ENCODE measurements at regions of chr10 and their contacts with region 1.

Region 1: DNA sequence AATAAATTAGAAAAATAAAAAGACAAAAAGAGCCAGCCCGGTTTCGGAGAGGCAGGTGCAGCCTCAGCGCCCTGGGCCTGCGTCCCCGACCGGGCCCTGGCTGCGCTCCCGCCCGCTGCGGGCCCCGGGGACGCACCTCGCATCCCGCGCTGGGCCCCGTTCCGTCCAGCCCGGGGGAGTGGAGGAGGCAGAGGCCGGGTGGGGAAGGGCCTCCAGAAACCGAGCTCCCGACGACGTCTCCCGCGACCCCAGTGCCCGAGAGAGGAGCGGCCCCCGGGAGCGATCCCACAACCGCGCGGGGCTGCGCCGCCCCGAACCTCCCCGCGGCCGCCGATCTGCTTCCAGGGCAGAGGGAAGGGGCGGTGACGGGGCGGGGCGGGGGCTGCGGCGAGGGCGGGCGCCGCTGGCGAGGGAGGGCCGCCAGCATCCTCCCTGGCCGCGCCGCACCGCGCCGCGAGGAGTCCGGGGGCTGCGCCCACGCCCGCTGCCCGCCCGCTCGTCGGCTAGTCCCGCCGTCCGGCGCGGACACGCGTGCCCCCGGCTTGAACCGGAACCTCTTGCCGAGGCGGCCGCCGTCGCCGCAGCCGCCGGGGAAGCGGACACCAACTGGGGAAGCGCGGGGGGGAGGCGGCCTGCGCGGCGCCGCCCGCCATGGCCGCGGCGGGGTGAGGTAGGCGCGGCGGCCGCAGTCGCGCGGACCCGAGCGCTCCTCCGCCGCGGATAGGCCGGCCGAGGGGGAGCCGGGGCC is at the start of gene CCNY:
- DNase-seq: peak; percentile 88 to 90 (median 88)
- ATAC-seq: peak; percentile 84
- H3K4me3 ChIP-seq: peak within 1 kb of the TSS; percentile 90
- H3K27ac ChIP-seq: peak within 1 kb of the TSS; percentile 81
- H3K4me1 ChIP-seq: peaks cover 12 to 43% of the 10 kb centered on the region in 2 experiments; a peak in 4 of 5 replicates
- H3K27me3 ChIP-seq: no peaks in the 10 kb centered on the region
- CTCF ChIP-seq: no peak
- EP300 ChIP-seq: no peak
- POLR2A ChIP-seq: peak; percentile 83
- RAD21 ChIP-seq: no peak
- polyA plus RNA-seq, gene CCNY: 8.4 to 9.1 TPM

Region 2: DNA sequence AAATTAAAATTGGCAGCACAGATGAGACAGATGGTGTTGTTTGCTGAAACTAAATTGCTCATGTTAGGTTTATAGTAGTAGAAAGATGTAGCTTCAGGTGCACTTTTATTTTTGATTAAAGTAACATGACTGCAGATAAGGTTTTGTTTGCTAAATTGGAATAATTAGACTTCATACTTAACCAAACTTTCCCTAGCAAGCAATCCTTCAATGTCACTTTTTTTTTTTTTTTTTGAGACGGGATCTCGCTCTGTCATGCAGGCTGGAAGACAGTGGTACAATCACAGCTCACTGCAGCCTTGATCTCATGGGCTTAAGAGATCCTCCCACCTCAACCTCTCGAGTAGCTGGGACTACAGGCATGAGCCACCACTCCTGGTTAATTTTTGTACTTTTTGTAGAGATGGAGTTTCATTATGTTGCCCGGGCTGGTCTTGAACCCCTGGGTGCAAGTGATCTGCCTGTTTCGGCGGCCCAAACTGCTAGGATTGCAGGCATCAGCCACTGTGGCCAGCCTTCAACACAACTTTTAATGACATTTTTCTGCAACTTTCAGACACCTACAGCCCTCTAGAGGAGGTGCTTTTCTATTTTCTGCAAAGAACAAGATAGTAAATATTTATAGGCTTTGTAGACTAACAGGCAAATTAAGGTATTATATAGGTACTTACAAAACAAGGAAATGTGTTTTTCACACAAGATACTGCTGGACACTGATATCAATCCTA is 84.7 kb before region 1 on chr10:
- CTCF ChIA-PET with region 1: no interaction called
- POLR2A ChIA-PET with region 1: no interaction called
- in situ Hi-C with region 1: no loop called
- intact Hi-C with region 1: loop called (anchors 5 kb)
- DNase-seq: no peak
- ATAC-seq: no peak
- H3K4me3 ChIP-seq: no peak overlapping the region
- H3K27ac ChIP-seq: no peak overlapping the region
- H3K4me1 ChIP-seq: no peaks in the 10 kb centered on the region; a peak in 1 of 5 replicates
- H3K27me3 ChIP-seq: no peaks in the 10 kb centered on the region
- CTCF ChIP-seq: no peak
- EP300 ChIP-seq: no peak
- POLR2A ChIP-seq: no peak
- RAD21 ChIP-seq: no peak

Region 3: GRCh38 chr10:35353805-35354204 is 17.5 kb after region 1 on chr10:
- CTCF ChIA-PET with region 1: no interaction called
- POLR2A ChIA-PET with region 1: interaction called, 19 read pairs
- in situ Hi-C with region 1: no loop called
- intact Hi-C with region 1: no loop called
- DNase-seq: no peak
- ATAC-seq: peak; percentile 34
- H3K4me3 ChIP-seq: no peak overlapping the region
- H3K27ac ChIP-seq: no peak overlapping the region
- H3K4me1 ChIP-seq: peaks cover 12 to 48% of the 10 kb centered on the region in 2 experiments; a peak in 4 of 5 replicates
- H3K27me3 ChIP-seq: no peaks in the 10 kb centered on the region
- CTCF ChIP-seq: no peak
- EP300 ChIP-seq: no peak
- POLR2A ChIP-seq: no peak
- RAD21 ChIP-seq: no peak

Region 4: DNA sequence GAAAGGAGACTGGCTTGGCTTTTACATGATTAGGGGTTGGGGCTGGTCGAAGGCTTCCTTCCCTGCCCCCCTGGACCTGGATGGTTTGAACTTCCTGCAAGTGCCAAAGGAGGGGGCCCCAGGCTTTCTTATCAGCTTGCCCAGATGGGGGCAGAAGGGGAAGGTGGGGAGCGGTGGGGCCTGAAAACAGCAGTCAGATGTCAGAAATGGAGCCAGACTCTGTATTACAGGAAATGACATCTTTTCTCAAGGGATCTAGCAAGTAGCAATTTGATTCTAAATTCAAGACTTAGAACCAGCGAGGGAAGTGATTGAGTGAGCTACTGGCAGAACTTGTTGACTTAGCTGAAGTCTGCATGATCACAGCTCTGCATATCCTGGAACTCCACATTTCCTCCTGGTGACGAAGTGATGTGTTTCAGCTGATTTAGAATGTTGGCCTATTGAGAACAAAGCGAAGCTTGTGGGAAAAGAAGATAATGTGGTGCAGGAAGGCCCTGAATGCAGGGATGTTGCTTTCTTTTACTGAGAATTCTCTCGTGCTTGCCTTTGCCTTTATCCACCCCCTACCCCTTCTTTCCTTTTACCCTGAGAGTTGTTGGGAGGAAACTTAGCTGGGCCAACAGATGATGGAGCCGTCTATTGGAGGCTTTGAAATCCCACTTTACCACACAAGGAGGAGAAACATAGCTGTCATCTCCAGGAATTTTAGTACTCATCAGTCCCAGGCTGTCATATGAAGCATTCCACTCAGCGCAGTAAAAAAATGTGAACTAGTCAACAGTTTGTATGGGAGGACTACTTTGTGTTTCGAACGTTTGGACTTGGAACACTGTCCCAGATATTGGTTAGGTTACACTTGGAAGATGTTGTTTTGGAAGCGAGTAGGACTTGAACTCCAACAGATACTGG is 43.2 kb after region 1 on chr10:
- CTCF ChIA-PET with region 1: no interaction called
- POLR2A ChIA-PET with region 1: no interaction called
- in situ Hi-C with region 1: no loop called
- intact Hi-C with region 1: loop called (anchors 2 kb)
- DNase-seq: peak; percentile 91 to 94 (median 92)
- ATAC-seq: peak; percentile 85
- H3K4me3 ChIP-seq: peak overlapping the region; percentile 27
- H3K27ac ChIP-seq: peak overlapping the region; percentile 96
- H3K4me1 ChIP-seq: peaks cover 25 to 65% of the 10 kb centered on the region in 2 experiments
- H3K27me3 ChIP-seq: no peaks in the 10 kb centered on the region
- CTCF ChIP-seq: peak; percentile 30 to 60 (median 59); a peak in 4 of 6 replicates
- EP300 ChIP-seq: peak; percentile 91
- POLR2A ChIP-seq: no peak
- RAD21 ChIP-seq: peak; percentile 57 to 64

Region 5: GRCh38 chr10:35394411-35394851 is 58.2 kb after region 1 on chr10:
- CTCF ChIA-PET with region 1: no interaction called
- POLR2A ChIA-PET with region 1: no interaction called
- in situ Hi-C with region 1: no loop called
- intact Hi-C with region 1: loop called (anchors 2 kb)
- DNase-seq: no peak
- ATAC-seq: no peak
- H3K4me3 ChIP-seq: no peak overlapping the region
- H3K27ac ChIP-seq: peak overlapping the region; percentile 23; the same call in 1 of the 3 replicates
- H3K4me1 ChIP-seq: peaks cover 25 to 97% of the 10 kb centered on the region in 2 experiments
- H3K27me3 ChIP-seq: no peaks in the 10 kb centered on the region
- CTCF ChIP-seq: no peak
- EP300 ChIP-seq: no peak
- POLR2A ChIP-seq: no peak
- RAD21 ChIP-seq: no peak

Region 6: GRCh38 chr10:35412900-35413491 is 76.7 kb after region 1 on chr10:
- CTCF ChIA-PET with region 1: no interaction called
- POLR2A ChIA-PET with region 1: no interaction called
- in situ Hi-C with region 1: no loop called
- intact Hi-C with region 1: loop called (anchors 5 kb)
- DNase-seq: peak in 3 of 4 experiments; percentile 33 to 72 (median 69)
- ATAC-seq: peak; percentile 63
- H3K4me3 ChIP-seq: 0 out of 2 replicates have a peak overlapping the region, but pooled peaks have one; percentile 4
- H3K27ac ChIP-seq: peak overlapping the region; percentile 76
- H3K4me1 ChIP-seq: peaks cover 24 to 46% of the 10 kb centered on the region in 2 experiments
- H3K27me3 ChIP-seq: no peaks in the 10 kb centered on the region
- CTCF ChIP-seq: no peak
- EP300 ChIP-seq: peak; percentile 40; the same call in 1 of the 2 replicates
- POLR2A ChIP-seq: no peak
- RAD21 ChIP-seq: no peak

Measured in K562 (cell line).